Left ventricle myocardium superior (tissue), 1 donor: ENCODE measurements at regions of chr1 and their contacts with region 1.

Region 1: GRCh38 chr1:77978969-77979876 is at the start of gene FUBP1:
- DNase-seq: peak; percentile 93
- ATAC-seq: peak; percentile 92
- total RNA-seq, gene FUBP1: 50.7 TPM

Region 2: DNA sequence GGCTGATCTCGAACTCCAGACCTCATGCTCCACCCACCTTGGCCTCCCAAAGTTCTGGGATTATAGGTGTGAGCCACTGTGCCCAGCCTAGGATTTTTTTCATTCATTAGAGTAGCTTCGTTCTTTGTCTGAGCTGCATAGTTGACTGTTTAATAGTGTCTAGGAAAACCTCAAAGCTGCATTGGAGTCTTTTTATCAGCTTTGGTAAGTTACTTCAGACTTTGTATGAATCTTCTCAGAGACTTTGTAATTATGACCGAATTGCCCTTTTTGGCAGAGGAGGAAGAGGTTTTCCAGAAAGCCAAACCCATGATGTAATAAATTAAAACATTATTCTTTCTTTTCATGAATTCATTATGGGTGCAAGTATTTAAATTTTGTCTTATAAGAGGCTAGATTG is 30.6 kb after region 1 on chr1:
- intact Hi-C with region 1: loop called (anchors 5 kb)
- DNase-seq: no peak
- ATAC-seq: no peak

Region 3: GRCh38 chr1:78114034-78114956 is 135.1 kb after region 1 on chr1:
- intact Hi-C with region 1: loop called (anchors 5 kb)
- DNase-seq: peak; percentile 32
- ATAC-seq: peak; percentile 81